Aorta (tissue), 5 donors: ENCODE measurements at regions of chr3 and their contacts with region 1.

Region 1: GRCh38 chr3:184371570-184372018 is 6.4 kb downstream of the THPO start:
- DNase-seq: peak; percentile 87
- ATAC-seq: peak; percentile 91
- H3K4me3 ChIP-seq: no peak overlapping the region
- H3K27ac ChIP-seq: no peak overlapping the region
- H3K4me1 ChIP-seq: peaks cover 3 to 4% of the 10 kb centered on the region in 2 donors
- H3K27me3 ChIP-seq: no peaks in the 10 kb centered on the region

Region 2: GRCh38 chr3:184417619-184418327 is 46.2 kb after region 1 on chr3:
- intact Hi-C with region 1: loop called in 1 of 2 experiments (anchors 5 kb)
- DNase-seq: peak; percentile 79 to 89
- ATAC-seq: peak; percentile 88
- H3K4me3 ChIP-seq: no peak overlapping the region
- H3K27ac ChIP-seq: no peak overlapping the region
- H3K4me1 ChIP-seq: no peaks in the 10 kb centered on the region
- H3K27me3 ChIP-seq: no peaks in the 10 kb centered on the region

Region 3: GRCh38 chr3:184469423-184469822 is 97.8 kb after region 1 on chr3:
- intact Hi-C with region 1: loop called (anchors 5 kb)
- DNase-seq: no peak
- ATAC-seq: no peak
- H3K4me3 ChIP-seq: no peak overlapping the region
- H3K27ac ChIP-seq: no peak overlapping the region
- H3K4me1 ChIP-seq: no peaks in the 10 kb centered on the region
- H3K27me3 ChIP-seq: no peaks in the 10 kb centered on the region

Region 4: DNA sequence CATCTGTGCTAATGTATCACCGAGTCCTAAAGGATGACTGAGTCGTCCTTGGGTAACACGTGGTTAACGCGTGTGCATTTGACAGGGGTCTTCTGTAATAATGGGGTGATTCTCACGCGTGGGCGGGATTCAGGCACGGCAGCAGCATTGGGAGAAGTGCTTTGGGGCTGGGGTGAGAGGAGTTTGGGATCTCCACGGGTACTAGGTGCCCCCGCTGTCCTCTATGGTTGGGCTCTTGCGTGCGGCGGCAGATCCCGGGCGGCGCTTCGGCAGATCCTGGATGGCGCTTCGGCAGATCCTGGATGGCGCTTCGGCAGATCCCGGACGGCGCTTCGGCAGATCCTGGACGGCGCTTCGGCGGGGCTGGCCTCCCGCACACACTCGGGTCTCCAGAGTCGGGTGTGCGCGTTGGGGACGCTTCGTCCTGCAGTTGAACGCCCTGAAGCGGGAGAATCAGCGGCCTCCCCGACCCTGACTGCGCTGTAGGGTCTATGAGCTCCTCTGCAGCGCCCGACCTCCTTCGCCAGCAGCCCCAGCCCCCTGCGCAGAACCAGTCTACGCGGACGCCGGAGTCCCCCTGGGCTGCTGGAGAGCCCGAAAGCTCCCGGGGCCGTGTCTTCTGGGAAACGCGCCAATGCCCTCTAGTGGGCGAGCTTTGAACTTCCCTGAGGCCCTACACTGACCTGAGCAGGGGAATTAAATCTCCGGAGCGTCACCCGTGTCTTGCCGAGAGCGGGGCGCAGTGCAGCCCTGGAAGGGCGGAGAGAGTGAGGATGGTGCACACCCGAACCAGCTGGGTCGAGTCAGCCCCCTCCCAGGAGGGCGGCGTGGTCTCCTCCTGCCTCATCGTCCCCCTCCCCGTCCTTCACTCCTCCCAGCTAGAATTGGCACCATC is 141.9 kb after region 1 on chr3:
- intact Hi-C with region 1: loop called (anchors 2 to 5 kb)
- DNase-seq: peak; percentile 92 to 94
- ATAC-seq: peak; percentile 95
- H3K4me3 ChIP-seq: no peak overlapping the region
- H3K27ac ChIP-seq: no peak overlapping the region
- H3K4me1 ChIP-seq: no peaks in the 10 kb centered on the region
- H3K27me3 ChIP-seq: no peaks in the 10 kb centered on the region

Region 5: DNA sequence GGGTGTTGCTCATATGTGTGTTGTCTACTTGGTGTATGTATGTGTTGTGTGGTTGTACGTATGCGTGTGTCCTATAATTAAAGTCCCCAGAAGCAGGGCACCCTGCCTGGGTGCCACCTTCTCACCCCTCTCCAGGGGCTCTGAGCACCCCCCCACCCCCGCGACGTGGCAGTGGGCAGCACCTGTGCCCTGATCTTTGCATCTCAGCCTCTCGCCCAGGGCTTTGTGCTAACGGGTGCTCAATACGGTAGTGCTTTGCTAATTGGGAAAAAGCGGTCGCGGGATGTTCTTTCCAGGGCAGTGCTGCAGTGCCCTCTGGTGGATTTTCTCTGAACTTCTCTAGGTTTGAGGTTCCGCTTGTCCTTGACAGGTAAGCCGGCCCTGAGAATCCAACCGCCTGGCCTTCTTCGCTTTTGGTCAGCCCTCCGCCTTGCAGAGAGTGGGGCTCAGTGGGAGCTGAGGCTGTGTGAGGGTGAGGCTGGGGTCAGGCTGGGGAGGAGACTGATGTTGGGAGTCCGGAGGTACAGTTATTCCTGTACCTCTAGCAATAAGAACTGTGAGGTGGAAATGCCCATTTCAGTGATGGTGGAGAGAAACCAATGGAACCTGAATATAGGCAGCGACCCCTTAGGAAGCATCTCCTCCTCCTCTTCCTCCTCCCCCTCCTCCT is 172.4 kb after region 1 on chr3:
- intact Hi-C with region 1: loop called (anchors 5 kb)
- DNase-seq: peak in 1 of 2 donors; percentile 71
- ATAC-seq: peak; percentile 87
- H3K4me3 ChIP-seq: no peak overlapping the region
- H3K27ac ChIP-seq: no peak overlapping the region
- H3K4me1 ChIP-seq: no peaks in the 10 kb centered on the region
- H3K27me3 ChIP-seq: no peaks in the 10 kb centered on the region